ENCODE measurements at regions of chr16 and their contacts with region 1.

Region 1: GRCh38 chr16:5851393-5851982 is 753.9 kb upstream of the EEF2KMT start:
- DNase-seq: no peak
- ATAC-seq: no peak

Region 2: GRCh38 chr16:5918567-5919127 is 67.2 kb after region 1 on chr16:
- intact Hi-C with region 1: loop called in 1 of 2 experiments (anchors 10 kb)
- DNase-seq: peak; percentile 28 to 66
- ATAC-seq: peak; percentile 90

Region 3: GRCh38 chr16:5944971-5945763 is 93.7 kb after region 1 on chr16:
- intact Hi-C with region 1: no loop called
- DNase-seq: no peak
- ATAC-seq: no peak

Region 4: DNA sequence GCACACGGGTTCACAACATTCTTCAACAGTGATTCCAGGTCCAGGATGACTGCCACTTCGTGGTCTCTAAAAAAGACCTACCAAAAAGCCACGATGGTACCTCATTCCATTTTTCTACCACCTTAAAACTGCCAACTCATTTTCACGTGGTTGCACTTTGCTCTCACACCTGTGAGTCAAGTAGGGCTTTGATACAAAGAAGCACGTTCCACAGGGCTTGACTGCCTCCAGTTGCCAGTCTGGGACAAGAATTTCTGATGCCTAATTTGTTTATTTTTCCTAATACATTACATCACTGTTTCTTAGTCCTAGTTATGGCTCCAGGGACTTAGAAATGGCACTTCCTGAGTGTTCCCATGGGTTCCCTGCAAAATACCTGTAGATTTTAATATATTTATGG is 157.7 kb after region 1 on chr16:
- intact Hi-C with region 1: no loop called
- DNase-seq: no peak
- ATAC-seq: peak; percentile 69

Region 5: GRCh38 chr16:6032438-6032837 is 180.9 kb after region 1 on chr16:
- intact Hi-C with region 1: no loop called
- DNase-seq: no peak
- ATAC-seq: no peak